ENCODE measurements at regions of chr9 and their contacts with region 1.

Region 1: DNA sequence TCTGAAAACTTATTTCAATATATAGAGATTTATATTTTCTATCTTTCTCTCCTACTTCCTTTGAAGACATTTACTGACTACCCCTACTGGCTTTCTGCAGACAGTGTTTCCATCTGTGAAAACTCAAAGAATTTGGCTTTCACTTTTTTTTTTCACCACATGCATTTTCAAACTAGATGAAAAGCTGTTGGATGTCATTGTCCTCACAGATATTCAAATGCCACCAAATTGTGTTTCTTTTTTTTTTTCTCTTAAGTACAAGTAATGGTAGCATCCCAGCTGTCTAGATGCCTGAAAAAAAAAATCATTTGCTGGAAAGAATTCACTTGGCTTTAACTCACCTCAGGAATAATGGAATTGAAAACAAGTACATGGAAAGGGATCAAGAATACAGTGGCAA is 2258.6 kb upstream of the ACO1 start:
- DNase-seq: no peak
- ATAC-seq: no peak
- H3K4me3 ChIP-seq: no peak overlapping the region
- H3K4me3 Mint-ChIP-seq: no peak overlapping the region
- H3K27ac ChIP-seq: no peak overlapping the region
- H3K27ac Mint-ChIP-seq: no peak overlapping the region
- H3K4me1 ChIP-seq: no peaks in the 10 kb centered on the region
- H3K4me1 Mint-ChIP-seq: no peaks in the 10 kb centered on the region
- H3K27me3 ChIP-seq: no peaks in the 10 kb centered on the region
- H3K27me3 Mint-ChIP-seq: no peaks in the 10 kb centered on the region
- CTCF ChIP-seq: no peak

Region 2: DNA sequence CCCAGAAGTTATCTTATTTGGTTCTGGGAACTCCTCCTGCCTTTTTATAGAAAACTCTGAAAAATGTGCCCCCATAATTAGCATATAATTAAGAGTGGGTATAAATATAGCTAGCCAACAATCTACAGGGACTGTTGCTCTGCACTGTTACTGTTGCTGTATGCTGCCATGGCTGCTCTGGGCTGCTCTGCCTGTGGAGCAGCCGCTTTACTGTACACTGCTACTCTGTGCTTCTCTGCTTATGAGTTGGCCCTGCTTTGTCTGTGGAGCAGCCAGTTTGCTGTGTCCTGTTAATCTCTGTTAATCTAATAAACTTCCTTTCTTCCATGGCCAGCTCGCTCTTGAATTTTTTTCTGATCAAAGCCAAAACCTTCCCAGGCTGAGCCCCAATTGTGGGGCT is 14.5 kb after region 1 on chr9:
- CTCF ChIA-PET with region 1: no interaction called
- POLR2A ChIA-PET with region 1: no interaction called
- intact Hi-C with region 1: no loop called
- DNase-seq: no peak
- ATAC-seq: no peak
- H3K4me3 ChIP-seq: no peak overlapping the region
- H3K4me3 Mint-ChIP-seq: no peak overlapping the region
- H3K27ac ChIP-seq: no peak overlapping the region
- H3K27ac Mint-ChIP-seq: no peak overlapping the region
- H3K4me1 ChIP-seq: no peaks in the 10 kb centered on the region
- H3K4me1 Mint-ChIP-seq: no peaks in the 10 kb centered on the region
- H3K27me3 ChIP-seq: no peaks in the 10 kb centered on the region
- H3K27me3 Mint-ChIP-seq: no peaks in the 10 kb centered on the region
- CTCF ChIP-seq: no peak

Region 3: DNA sequence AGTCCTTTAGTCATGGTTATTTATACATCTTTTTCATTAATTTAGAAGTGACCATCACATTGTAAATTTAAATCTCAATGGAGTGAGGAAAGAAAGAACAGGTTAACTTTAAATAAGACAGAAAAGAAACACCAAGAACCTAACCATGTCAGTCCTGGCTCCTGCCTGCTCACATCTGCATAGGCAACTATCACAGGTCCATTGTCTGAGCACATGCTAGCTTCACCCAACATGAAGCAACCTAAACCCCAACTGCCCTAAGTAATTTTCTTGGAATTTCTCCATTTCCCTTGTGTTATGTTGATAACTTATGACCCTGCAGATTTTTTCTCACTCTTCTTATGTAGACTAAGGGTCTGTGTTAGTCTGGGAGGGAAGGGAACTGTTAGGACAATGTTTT is 52.7 kb after region 1 on chr9:
- CTCF ChIA-PET with region 1: no interaction called
- POLR2A ChIA-PET with region 1: no interaction called
- intact Hi-C with region 1: loop called in 1 of 2 experiments (anchors 5 kb)
- DNase-seq: no peak
- ATAC-seq: no peak
- H3K4me3 ChIP-seq: no peak overlapping the region
- H3K4me3 Mint-ChIP-seq: no peak overlapping the region
- H3K27ac ChIP-seq: no peak overlapping the region
- H3K27ac Mint-ChIP-seq: no peak overlapping the region
- H3K4me1 ChIP-seq: no peaks in the 10 kb centered on the region
- H3K4me1 Mint-ChIP-seq: no peaks in the 10 kb centered on the region
- H3K27me3 ChIP-seq: no peaks in the 10 kb centered on the region
- H3K27me3 Mint-ChIP-seq: no peaks in the 10 kb centered on the region
- CTCF ChIP-seq: no peak

Measured in CD8-positive, alpha-beta T cell (primary cell).